AG04449 (cell line): ENCODE measurements at regions of chr17 and their contacts with region 1.

Region 1: DNA sequence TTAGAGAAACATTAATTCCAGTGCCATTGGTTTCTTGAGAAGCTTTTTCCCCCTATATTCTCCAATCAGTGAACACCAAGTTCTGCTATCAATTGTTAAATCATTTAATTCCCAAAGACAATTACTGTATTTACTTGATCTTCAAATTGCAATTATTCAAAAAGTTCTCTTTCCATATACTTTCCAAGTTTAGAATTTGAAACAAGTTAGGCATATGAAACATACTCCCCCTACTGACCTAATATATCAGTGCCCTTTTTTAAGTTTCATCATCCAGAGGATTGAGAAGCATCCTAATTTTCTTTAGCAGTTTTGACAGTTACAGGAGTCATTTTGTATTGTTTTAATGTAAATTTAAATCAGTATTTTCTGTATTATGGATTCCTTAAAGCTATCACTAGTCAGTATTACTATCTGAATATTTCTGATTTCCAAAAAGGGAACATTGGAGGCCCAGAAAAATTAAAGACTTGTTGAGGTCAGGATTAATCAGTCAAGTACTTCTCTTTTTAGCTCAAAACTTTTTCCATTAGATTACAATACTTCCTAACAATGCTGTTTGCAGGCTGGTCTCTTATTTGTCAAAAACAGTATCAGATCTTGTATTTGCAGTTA is 16.3 kb downstream of the MEIOC start:
- DNase-seq: no peak
- H3K4me3 ChIP-seq: no peak overlapping the region
- CTCF ChIP-seq: peak; percentile 35

Region 2: GRCh38 chr17:44487170-44487569 is 185.4 kb before region 1 on chr17:
- CTCF ChIA-PET with region 1: no interaction called
- POLR2A ChIA-PET with region 1: no interaction called
- DNase-seq: no peak
- H3K4me3 ChIP-seq: no peak overlapping the region
- CTCF ChIP-seq: no peak

Region 3: GRCh38 chr17:44636562-44636961 is 36.0 kb before region 1 on chr17:
- CTCF ChIA-PET with region 1: interaction called, 18 read pairs
- POLR2A ChIA-PET with region 1: no interaction called
- DNase-seq: peak; percentile 23
- H3K4me3 ChIP-seq: no peak overlapping the region
- CTCF ChIP-seq: peak; percentile 49

Region 4: GRCh38 chr17:44655983-44656710 is 16.4 kb before region 1 on chr17 and contains the start of gene MEIOC:
- CTCF ChIA-PET with region 1: interaction called, 21 read pairs
- POLR2A ChIA-PET with region 1: no interaction called
- DNase-seq: no peak
- H3K4me3 ChIP-seq: peak within 1 kb of the TSS; percentile 36
- CTCF ChIP-seq: no peak

Region 5: DNA sequence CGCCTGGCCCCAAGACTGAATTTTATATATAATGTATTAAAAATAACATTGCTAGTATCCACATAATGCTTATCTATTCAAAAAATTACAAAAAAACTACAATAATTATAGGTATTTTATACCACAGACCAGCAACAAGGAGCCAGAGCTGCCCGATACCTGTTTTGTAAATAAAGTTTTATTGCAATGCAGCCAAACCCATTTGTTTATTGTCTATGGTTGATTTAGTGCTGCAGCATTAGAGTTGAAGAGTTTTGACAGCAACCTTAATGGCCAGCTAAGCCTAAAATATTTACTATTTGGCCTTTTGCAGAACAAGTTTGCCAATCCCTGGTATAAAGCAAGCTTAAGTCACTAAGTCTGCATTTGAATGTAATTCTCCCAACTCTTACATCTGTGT is 10.8 kb before region 1 on chr17:
- CTCF ChIA-PET with region 1: interaction called, 21 read pairs
- POLR2A ChIA-PET with region 1: no interaction called
- DNase-seq: no peak
- H3K4me3 ChIP-seq: no peak overlapping the region
- CTCF ChIP-seq: no peak

Region 6: GRCh38 chr17:44689477-44690217 is 17.1 kb after region 1 on chr17 and contains the start of gene CCDC43:
- CTCF ChIA-PET with region 1: interaction called, 34 read pairs
- POLR2A ChIA-PET with region 1: no interaction called
- DNase-seq: peak; percentile 59
- H3K4me3 ChIP-seq: peak within 1 kb of the TSS; percentile 98
- CTCF ChIP-seq: no peak